ENCODE measurements at regions of chr4 and their contacts with region 1.

Region 1: GRCh38 chr4:40840985-40841571 is 91.3 kb downstream of the NSUN7 start:
- H3K4me3 ChIP-seq: no peak overlapping the region
- H3K27ac ChIP-seq: no peak overlapping the region
- H3K4me1 ChIP-seq: no peaks in the 10 kb centered on the region
- CTCF ChIP-seq: peak; percentile 40; the same call in 1 of the 2 replicates

Region 2: DNA sequence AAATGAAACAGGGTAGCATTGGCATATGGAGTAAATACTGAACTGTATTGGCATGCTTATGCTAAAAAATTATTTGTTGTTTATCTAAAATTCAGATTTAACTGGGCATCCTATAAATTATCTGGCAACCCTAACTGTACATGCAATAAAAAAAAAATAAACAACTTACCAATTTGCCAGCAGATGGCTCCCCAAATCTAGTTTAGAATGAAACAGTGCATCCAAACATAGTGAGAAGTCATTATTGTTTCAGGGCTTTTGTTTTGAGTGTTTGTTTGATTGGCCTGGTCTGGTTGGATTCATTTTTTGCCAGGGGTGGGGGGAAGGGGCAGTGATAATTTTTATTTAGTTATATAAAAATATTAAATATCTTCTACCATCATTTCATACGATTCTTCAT is 104.2 kb before region 1 on chr4:
- CTCF ChIA-PET with region 1: interaction called, 14 read pairs
- POLR2A ChIA-PET with region 1: no interaction called
- H3K4me3 ChIP-seq: no peak overlapping the region
- H3K27ac ChIP-seq: no peak overlapping the region
- H3K4me1 ChIP-seq: 0 out of 2 replicates have a peak, but pooled peaks cover under 1% of the 10 kb centered on the region
- CTCF ChIP-seq: no peak

Region 3: GRCh38 chr4:40865696-40866095 is 24.6 kb after region 1 on chr4:
- CTCF ChIA-PET with region 1: interaction called, 12 read pairs
- POLR2A ChIA-PET with region 1: no interaction called
- H3K4me3 ChIP-seq: no peak overlapping the region
- H3K27ac ChIP-seq: no peak overlapping the region
- H3K4me1 ChIP-seq: no peaks in the 10 kb centered on the region
- CTCF ChIP-seq: no peak

Region 4: GRCh38 chr4:40897557-40898203 is 56.6 kb after region 1 on chr4:
- CTCF ChIA-PET with region 1: interaction called, 18 read pairs
- POLR2A ChIA-PET with region 1: interaction called, 3 read pairs
- H3K4me3 ChIP-seq: no peak overlapping the region
- H3K27ac ChIP-seq: no peak overlapping the region
- H3K4me1 ChIP-seq: no peaks in the 10 kb centered on the region
- CTCF ChIP-seq: peak; percentile 41; the same call in 1 of the 2 replicates

Region 5: GRCh38 chr4:41221850-41222645 is 381.0 kb after region 1 on chr4:
- CTCF ChIA-PET with region 1: no interaction called
- POLR2A ChIA-PET with region 1: no interaction called
- H3K4me3 ChIP-seq: no peak overlapping the region
- H3K27ac ChIP-seq: no peak overlapping the region
- H3K4me1 ChIP-seq: peaks cover 5% of the 10 kb centered on the region; the same call in 1 of the 2 replicates
- CTCF ChIP-seq: no peak